Heart left ventricle (tissue), 16 donors: ENCODE measurements at regions of chr2 and their contacts with region 1.

Region 1: GRCh38 chr2:203683932-203684556 is 22.4 kb upstream of the CD28 start:
- DNase-seq: peak in 1 of 5 donors; percentile 45
- ATAC-seq: peak in 3 of 4 donors; percentile 29 to 49 (median 42)
- H3K4me3 ChIP-seq: no peak overlapping the region
- H3K27ac ChIP-seq: peak overlapping the region; percentile 68 to 94 (median 84)
- H3K4me1 ChIP-seq: peaks cover 12 to 87% (median 73%) of the 10 kb centered on the region in 12 donors
- H3K27me3 ChIP-seq: no peaks in the 10 kb centered on the region
- CTCF ChIP-seq: no peak
- POLR2A ChIP-seq: no peak

Region 2: GRCh38 chr2:203126996-203127395 is 557.0 kb before region 1 on chr2:
- intact Hi-C with region 1: no loop called
- DNase-seq: no peak
- ATAC-seq: no peak
- H3K4me3 ChIP-seq: no peak overlapping the region
- H3K27ac ChIP-seq: no peak overlapping the region
- H3K4me1 ChIP-seq: no peaks in the 10 kb centered on the region
- H3K27me3 ChIP-seq: no peaks in the 10 kb centered on the region
- CTCF ChIP-seq: no peak
- POLR2A ChIP-seq: no peak

Region 3: DNA sequence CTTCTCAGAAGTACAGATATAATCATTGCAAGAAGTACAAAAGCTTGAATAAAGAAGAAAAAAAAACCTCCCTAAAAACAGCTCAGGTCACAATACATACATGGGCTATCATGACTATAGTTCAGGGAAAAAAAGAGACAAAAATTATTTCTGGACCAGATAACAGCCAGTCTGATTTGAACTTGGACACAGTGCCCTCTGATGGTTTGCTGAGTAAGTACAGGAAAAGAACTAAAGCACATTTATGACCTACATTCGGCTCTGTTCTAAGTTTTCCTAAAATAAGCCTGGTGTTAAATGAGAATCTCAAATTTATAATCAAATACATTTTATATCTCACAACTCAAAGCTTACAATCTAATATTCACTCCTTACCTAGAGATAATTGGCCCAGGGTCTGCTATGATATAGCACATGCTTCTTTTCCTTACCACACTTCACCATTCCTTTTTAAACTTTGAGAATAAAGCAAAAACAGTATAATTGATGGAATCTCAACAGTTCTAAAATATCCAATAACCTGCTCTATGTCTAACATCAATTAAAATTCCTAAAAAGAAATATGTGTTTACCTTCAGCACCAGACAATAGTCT is 230.1 kb before region 1 on chr2:
- intact Hi-C with region 1: no loop called
- DNase-seq: peak in 2 of 5 donors; percentile 20 to 36
- ATAC-seq: peak; percentile 36 to 73 (median 64)
- H3K4me3 ChIP-seq: no peak overlapping the region
- H3K27ac ChIP-seq: no peak overlapping the region
- H3K4me1 ChIP-seq: peaks cover 0 to 23% (median 7%) of the 10 kb centered on the region in 12 donors
- H3K27me3 ChIP-seq: no peaks in the 10 kb centered on the region
- CTCF ChIP-seq: peak; percentile 58 to 84 (median 70)
- POLR2A ChIP-seq: no peak

Region 4: GRCh38 chr2:203626952-203627681 is 56.9 kb before region 1 on chr2:
- intact Hi-C with region 1: loop called in 1 of 10 experiments (anchors 5 kb)
- DNase-seq: no peak
- ATAC-seq: peak in 3 of 4 donors; percentile 32 to 66 (median 62)
- H3K4me3 ChIP-seq: no peak overlapping the region
- H3K27ac ChIP-seq: peak overlapping the region in 9 of 12 donors; percentile 10 to 68 (median 18)
- H3K4me1 ChIP-seq: peaks cover 0 to 19% (median 0%) of the 10 kb centered on the region in 12 donors
- H3K27me3 ChIP-seq: no peaks in the 10 kb centered on the region
- CTCF ChIP-seq: no peak
- POLR2A ChIP-seq: no peak

Region 5: DNA sequence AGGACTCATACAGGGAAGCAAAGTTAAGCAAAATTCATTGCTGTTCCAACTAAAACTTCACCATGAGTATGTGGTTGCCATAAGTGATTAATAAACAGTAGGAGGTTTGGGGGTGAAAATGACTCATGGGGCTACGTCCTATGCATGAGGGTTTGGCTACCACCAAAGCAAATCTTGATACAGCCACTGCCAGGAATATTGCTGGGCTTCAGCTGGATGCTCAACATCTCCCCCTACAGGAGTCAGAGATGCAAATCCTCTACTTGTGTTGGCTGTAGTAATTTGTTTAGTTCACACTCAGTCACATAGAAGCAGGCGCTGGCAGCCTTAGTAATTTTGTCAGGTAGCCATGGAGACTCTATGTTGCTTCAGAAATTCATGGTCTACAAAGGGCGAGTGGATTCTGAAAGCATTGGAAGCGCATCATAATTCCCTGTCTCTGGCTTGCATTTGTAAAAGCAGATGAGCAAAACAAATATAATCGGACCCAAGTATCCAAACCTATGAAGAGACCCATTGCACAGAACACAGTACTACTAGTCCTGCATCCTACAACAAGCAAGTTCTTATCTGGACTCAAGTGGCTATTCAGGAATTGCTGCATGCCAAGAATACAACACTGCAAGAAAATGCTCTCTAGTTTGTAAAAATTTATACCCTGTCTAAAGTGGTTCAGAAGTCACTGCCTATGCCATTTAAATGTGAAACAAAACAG is 98.4 kb after region 1 on chr2:
- intact Hi-C with region 1: loop called in 5 of 10 experiments (anchors 5 to 10 kb)
- DNase-seq: peak in 4 of 5 donors; percentile 31 to 55 (median 40)
- ATAC-seq: peak in 3 of 4 donors; percentile 67 to 80 (median 69)
- H3K4me3 ChIP-seq: no peak overlapping the region
- H3K27ac ChIP-seq: peak overlapping the region in 4 of 12 donors; percentile 1 to 44 (median 14)
- H3K4me1 ChIP-seq: peaks cover 0 to 47% (median 21%) of the 10 kb centered on the region in 12 donors
- H3K27me3 ChIP-seq: no peaks in the 10 kb centered on the region
- CTCF ChIP-seq: peak; percentile 55 to 81 (median 70)
- POLR2A ChIP-seq: no peak